ENCODE measurements at regions of chr7 and their contacts with region 1.

Region 1: GRCh38 chr7:21986096-21986495 is 40.4 kb upstream of the CDCA7L start:
- DNase-seq: no peak
- H3K4me3 ChIP-seq: no peak overlapping the region
- CTCF ChIP-seq: no peak

Region 2: GRCh38 chr7:21454182-21454581 is 531.9 kb before region 1 on chr7:
- in situ Hi-C with region 1: no loop called
- DNase-seq: no peak
- H3K4me3 ChIP-seq: no peak overlapping the region
- CTCF ChIP-seq: no peak

Region 3: GRCh38 chr7:21939136-21939857 is 46.8 kb before region 1 on chr7:
- in situ Hi-C with region 1: no loop called
- DNase-seq: peak; percentile 80
- H3K4me3 ChIP-seq: no peak overlapping the region
- CTCF ChIP-seq: no peak

Region 4: DNA sequence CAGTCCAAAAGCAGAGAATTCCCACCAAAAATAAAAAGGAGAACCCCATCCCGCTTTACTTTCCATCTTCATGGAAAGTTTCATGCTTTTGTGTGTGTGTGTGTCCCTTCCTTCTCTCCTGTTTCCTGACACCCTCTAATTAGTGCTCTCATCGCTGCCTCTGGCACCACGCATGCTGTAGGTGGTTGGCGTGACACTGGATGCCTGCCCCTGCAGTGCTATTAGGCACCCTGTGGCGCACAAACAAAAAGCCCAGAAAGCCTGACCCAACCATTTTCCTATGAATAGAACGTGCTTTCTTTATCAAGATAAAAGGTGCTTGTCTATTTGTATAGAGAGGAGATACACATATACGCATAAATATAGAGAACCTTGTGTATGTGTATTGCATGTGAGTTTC is 80.4 kb after region 1 on chr7:
- in situ Hi-C with region 1: loop called (anchors 5 kb)
- DNase-seq: no peak
- H3K4me3 ChIP-seq: no peak overlapping the region
- CTCF ChIP-seq: no peak

Region 5: DNA sequence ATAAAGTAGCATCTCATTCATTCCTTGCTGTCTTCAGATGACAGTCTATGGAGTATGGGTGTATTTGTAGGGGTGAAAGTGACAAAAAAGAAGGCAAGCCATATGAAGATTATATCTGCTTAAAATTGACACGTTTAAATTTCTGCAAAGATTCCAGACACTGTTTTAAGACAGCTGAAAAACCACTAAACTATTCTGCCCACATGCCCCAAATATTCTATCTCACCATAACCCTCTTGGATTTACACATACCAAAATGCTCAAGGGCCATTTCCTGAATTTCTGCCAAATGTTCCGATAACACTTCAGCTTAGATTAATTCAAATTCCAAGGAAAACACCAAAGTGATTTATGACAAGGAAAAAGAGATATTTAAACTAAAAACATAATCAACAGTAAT is 641.0 kb after region 1 on chr7:
- in situ Hi-C with region 1: no loop called
- DNase-seq: peak; percentile 67
- H3K4me3 ChIP-seq: no peak overlapping the region
- CTCF ChIP-seq: no peak

Measured in astrocyte of the cerebellum (primary cell).